ENCODE measurements at regions of chr5 and their contacts with region 1.

Region 1: DNA sequence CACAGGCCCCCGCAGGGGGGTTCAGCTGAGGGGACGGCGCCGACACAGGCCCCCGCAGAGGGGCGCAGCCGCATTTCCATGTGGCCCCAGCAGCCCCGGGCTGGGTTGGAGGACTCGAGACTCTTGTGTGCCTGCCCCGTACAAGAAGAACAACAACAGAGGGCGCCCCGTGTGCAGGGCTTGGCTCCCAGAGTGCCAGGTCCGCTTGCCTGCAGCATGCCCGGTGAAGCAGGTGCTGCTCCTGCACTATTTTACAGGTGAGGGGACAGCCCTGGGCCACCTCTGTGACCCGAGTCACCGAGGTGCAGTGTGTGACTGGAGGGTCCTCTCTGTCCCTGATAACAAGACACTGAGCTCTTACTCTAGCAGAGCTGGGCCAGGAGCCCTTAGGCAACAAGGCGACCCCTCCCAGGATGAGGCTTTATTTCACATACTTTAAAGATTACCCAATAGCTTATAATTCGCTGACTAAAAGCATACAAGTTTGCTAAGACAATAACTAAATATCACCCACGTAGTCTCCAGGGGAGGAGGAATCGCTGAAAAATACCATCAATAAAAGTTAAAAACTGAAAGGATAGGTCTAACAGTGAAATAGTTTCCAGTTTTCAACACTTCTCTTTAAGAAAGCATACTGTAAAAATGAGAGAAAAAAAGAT is 41.7 kb upstream of the SLC9A3 start:
- DNase-seq: peak in 1 of 2 donors; percentile 65
- H3K4me3 ChIP-seq: no peak overlapping the region
- H3K27ac ChIP-seq: no peak overlapping the region
- H3K4me1 ChIP-seq: no peaks in the 10 kb centered on the region
- H3K27me3 ChIP-seq: peaks cover 0 to 38% of the 10 kb centered on the region in 2 donors
- CTCF ChIP-seq: no peak

Region 2: DNA sequence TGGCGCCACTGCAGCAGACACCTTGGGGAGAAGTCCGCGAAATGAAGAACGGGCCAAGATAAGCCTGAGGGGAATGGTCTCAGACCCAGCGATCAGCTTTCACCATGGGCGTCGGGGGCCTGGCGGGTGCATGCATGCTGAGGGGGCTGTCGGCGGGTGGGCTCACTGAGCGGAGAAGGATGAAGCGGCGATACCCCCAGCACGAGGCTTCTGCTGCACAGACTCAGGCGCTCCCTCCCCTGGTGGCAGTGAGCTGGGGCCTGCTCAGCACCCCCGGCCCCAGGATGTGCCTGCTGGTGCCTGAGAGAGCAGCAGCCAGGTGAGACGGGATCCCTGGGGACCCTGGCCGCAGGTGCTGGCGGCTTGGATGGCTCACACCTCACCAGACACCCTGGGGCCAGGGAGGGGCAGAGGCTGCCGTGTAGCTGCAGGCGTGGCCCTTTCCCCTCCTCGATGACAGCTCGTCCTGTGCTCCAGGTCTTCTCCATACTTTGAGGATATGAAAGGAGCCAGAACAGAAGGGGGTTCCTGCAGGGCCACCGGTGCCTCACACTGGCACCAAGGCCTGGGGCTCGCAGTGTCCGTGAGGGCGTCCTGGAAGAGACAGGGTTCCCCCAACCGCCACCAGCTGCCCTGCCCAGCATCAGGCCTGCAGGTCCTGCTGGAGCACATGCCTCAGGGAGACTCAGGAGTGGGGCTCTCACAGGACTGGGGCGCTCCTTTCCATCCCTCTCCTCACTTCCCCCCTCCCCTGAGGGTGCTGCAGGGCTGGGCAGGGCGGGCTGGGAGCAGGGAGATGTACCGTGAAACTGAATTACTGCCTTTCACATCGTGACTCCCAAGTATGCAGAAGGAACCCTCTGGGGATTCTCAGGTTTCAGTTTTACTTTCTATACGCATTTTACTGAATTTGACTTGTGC is 77.7 kb after region 1 on chr5:
- intact Hi-C with region 1: no loop called
- DNase-seq: no peak
- H3K4me3 ChIP-seq: no peak overlapping the region
- H3K27ac ChIP-seq: no peak overlapping the region
- H3K4me1 ChIP-seq: no peaks in the 10 kb centered on the region
- H3K27me3 ChIP-seq: no peaks in the 10 kb centered on the region
- CTCF ChIP-seq: no peak

Region 3: GRCh38 chr5:980001-980588 is 414.2 kb after region 1 on chr5:
- intact Hi-C with region 1: no loop called
- DNase-seq: peak in 1 of 2 donors; percentile 35
- H3K4me3 ChIP-seq: no peak overlapping the region
- H3K27ac ChIP-seq: no peak overlapping the region
- H3K4me1 ChIP-seq: no peaks in the 10 kb centered on the region
- H3K27me3 ChIP-seq: peaks cover 0 to 35% of the 10 kb centered on the region in 2 donors
- CTCF ChIP-seq: no peak

Region 4: GRCh38 chr5:1217596-1218206 is 651.8 kb after region 1 on chr5:
- intact Hi-C with region 1: loop called (anchors 5 kb)
- DNase-seq: no peak
- H3K4me3 ChIP-seq: no peak overlapping the region
- H3K27ac ChIP-seq: no peak overlapping the region
- H3K4me1 ChIP-seq: no peaks in the 10 kb centered on the region
- H3K27me3 ChIP-seq: peaks cover 0 to 18% of the 10 kb centered on the region in 2 donors
- CTCF ChIP-seq: no peak

Measured in tibial artery (tissue), 4 donors.